ENCODE measurements at regions of chr12 and their contacts with region 1.

Region 1: GRCh38 chr12:48995061-48995879 is 3.9 kb downstream of the DDN start:
- DNase-seq: peak; percentile 87
- ATAC-seq: peak; percentile 54
- H3K4me3 ChIP-seq: peak overlapping the region; percentile 54; the same call in 1 of the 2 replicates
- H3K27ac ChIP-seq: no peak overlapping the region
- H3K4me1 ChIP-seq: peaks cover 20% of the 10 kb centered on the region
- H3K27me3 ChIP-seq: no peaks in the 10 kb centered on the region
- CTCF ChIP-seq: peak; percentile 78

Region 2: DNA sequence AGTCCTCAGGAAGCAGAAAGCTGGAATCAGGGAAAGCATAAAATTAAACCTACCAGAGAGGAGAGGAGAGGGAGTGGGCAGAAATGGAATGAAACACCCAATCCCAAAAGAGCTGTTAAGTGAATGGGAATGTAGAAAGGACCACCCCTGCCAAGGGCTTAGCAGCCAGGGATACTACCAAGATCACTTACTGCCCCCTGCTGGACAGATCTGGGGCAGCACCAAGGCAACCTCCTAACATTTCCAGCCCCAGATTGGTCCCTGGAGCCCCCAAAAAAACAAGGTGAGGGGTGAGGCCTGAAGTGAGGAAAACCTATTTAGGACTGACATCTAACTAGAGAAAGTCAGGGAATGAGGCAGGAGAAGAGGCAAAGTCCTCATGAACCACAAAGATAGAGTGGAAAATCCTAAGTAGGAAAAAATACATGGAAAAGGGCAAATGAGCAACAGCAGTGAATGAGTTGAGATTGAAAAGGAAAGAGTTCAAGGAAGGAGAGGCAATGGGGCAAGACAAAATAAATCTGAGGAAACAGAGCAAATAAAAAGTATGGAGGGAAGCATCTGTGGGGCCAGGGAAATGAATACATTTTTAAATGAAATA is 58.8 kb before region 1 on chr12:
- CTCF ChIA-PET with region 1: no interaction called
- POLR2A ChIA-PET with region 1: no interaction called
- intact Hi-C with region 1: loop called (anchors 5 kb)
- DNase-seq: peak; percentile 76
- ATAC-seq: peak; percentile 79
- H3K4me3 ChIP-seq: no peak overlapping the region
- H3K27ac ChIP-seq: no peak overlapping the region
- H3K4me1 ChIP-seq: no peaks in the 10 kb centered on the region
- H3K27me3 ChIP-seq: no peaks in the 10 kb centered on the region
- CTCF ChIP-seq: peak; percentile 94

Region 3: GRCh38 chr12:48965298-48965838 is 29.9 kb before region 1 on chr12:
- CTCF ChIA-PET with region 1: interaction called, 5 read pairs
- POLR2A ChIA-PET with region 1: no interaction called
- intact Hi-C with region 1: loop called (anchors 1 kb)
- DNase-seq: no peak
- ATAC-seq: peak; percentile 70
- H3K4me3 ChIP-seq: no peak overlapping the region
- H3K27ac ChIP-seq: no peak overlapping the region
- H3K4me1 ChIP-seq: peaks cover 20% of the 10 kb centered on the region
- H3K27me3 ChIP-seq: no peaks in the 10 kb centered on the region
- CTCF ChIP-seq: peak; percentile 54

Region 4: DNA sequence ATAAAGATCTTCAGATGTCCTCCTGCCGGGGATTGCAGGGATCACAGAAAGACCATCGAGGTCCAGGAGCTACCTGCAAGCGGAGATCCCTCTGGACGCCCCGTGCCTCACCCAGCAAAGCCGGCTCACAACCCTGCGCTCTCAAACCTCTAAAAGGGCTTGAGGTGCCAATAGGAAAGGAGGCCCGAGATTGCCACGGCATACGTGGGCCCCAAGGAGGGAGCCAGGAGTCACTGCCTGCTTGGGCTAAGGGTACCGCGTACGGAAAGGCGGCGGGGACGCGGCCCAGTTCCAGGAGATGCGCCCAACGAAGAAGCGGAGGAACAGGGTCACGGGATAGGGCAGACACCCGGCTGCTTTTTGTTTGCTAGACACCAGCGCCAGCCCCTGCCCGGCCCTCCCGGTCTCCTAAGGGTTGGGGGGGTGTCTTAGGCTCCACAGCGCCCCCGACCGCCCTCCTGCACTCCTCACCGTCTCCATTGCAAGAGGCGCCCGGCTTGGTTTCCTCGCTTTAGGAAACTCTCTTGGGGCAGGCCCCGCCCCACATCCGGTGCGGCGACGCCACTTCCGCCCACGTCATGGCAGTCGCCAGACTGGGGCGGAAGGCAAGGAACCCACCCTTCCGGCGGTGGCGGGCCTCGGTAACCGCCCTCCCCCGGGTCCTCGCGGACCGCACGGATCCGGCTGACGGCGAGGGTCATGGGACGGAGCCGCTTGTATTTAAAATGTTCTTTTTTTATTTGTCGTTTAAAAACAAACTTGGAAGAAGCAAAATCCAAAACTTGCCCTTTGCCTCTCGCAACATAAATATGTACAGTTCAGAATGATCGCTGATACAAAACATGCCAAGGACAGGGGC is 23.2 kb after region 1 on chr12 and contains the start of gene PRKAG1:
- CTCF ChIA-PET with region 1: interaction called, 10 read pairs
- POLR2A ChIA-PET with region 1: interaction called, 6 read pairs
- intact Hi-C with region 1: no loop called
- DNase-seq: peak; percentile 97
- ATAC-seq: peak; percentile 90
- H3K4me3 ChIP-seq: peak within 1 kb of the TSS; percentile 93
- H3K27ac ChIP-seq: peak within 1 kb of the TSS; percentile 81
- H3K4me1 ChIP-seq: peaks cover 18% of the 10 kb centered on the region
- H3K27me3 ChIP-seq: no peaks in the 10 kb centered on the region
- CTCF ChIP-seq: peak; percentile 58
- total RNA-seq, gene PRKAG1: 62.1 and 66.5 TPM in 2 replicates

Measured in PC-3 (cell line).